ENCODE measurements at regions of chr3 and their contacts with region 1.

Region 1: GRCh38 chr3:183178629-183179549 is 16.4 kb upstream of the LAMP3 start:
- DNase-seq: no peak
- ATAC-seq: peak; percentile 27 to 43
- H3K4me3 ChIP-seq: peak overlapping the region; percentile 51 to 79 (median 60)
- H3K27ac ChIP-seq: no peak overlapping the region
- H3K4me1 ChIP-seq: peaks cover 6 to 9% of the 10 kb centered on the region in 2 donors
- H3K27me3 ChIP-seq: peaks cover 22 to 50% (median 32%) of the 10 kb centered on the region in 3 donors
- CTCF ChIP-seq: no peak
- POLR2A ChIP-seq: no peak

Region 2: DNA sequence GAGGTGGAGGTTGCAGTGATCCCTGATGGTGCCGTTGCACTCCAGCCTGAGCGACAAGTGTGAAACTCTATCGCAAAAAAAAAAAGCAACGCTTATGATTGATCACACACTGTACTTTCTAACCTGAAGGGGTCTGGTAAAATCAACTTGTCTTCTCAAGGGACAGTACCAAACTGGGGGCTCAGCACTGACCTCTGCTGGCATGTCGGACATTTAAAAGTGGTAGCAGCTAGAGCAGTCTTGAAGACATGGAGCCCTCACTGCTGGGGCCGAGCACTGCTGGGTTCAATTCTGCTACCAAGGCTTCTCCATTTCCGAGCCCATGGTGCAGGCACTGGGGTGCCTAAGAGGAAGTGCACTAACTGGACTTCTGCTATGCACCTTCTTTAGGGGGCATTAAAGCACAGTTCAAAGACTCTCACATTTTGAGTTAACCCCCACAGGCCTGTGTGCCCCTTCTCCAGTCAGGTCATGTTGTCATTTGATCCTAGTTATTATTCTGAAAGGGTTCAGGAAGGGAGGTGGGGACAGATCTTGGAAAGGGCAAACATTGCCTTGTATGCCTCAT is 10.1 kb after region 1 on chr3:
- in situ Hi-C with region 1: no loop called
- intact Hi-C with region 1: loop called (anchors 1 kb)
- DNase-seq: no peak
- ATAC-seq: peak in 1 of 2 donors; percentile 26
- H3K4me3 ChIP-seq: no peak overlapping the region
- H3K27ac ChIP-seq: no peak overlapping the region
- H3K4me1 ChIP-seq: no peaks in the 10 kb centered on the region
- H3K27me3 ChIP-seq: no peaks in the 10 kb centered on the region
- CTCF ChIP-seq: no peak
- POLR2A ChIP-seq: no peak

Region 3: DNA sequence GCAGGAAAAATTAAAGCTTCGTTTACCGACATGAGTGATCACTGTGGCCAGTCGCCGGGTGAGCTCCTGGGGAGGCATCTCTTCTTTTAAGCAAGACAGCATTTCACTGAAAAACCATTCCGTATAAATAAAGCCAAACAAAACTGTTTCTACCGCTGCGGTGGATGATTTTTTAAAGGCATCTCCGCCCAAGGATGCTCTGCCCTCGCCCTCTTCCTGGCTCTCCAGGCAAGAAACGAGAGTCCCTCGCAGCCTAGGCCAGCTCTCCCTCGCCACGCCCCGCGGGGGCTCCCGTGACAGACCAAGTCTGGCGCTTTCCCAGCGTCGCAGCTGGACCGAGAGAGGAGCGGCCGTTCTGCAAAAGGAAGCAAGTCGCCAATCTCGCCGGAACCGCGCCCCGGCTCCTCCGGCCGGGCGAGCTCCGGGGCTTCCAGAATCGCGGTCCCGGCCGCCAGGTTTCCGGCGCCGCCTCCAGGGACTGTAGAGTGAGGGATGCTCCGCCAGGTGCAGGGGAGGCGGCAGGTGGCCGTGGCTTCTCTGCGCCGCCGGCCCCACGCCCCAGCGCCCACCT is 249.1 kb after region 1 on chr3:
- in situ Hi-C with region 1: no loop called
- intact Hi-C with region 1: no loop called
- DNase-seq: peak in 1 of 2 donors; percentile 39
- ATAC-seq: peak; percentile 46 to 48
- H3K4me3 ChIP-seq: peak overlapping the region; percentile 62 to 68 (median 65)
- H3K27ac ChIP-seq: no peak overlapping the region
- H3K4me1 ChIP-seq: peaks cover 0 to 11% of the 10 kb centered on the region in 2 donors
- H3K27me3 ChIP-seq: peaks cover 10 to 25% (median 18%) of the 10 kb centered on the region in 3 donors
- CTCF ChIP-seq: no peak
- POLR2A ChIP-seq: no peak